H1 (cell line): ENCODE measurements at regions of chr7 and their contacts with region 1.

Region 1: DNA sequence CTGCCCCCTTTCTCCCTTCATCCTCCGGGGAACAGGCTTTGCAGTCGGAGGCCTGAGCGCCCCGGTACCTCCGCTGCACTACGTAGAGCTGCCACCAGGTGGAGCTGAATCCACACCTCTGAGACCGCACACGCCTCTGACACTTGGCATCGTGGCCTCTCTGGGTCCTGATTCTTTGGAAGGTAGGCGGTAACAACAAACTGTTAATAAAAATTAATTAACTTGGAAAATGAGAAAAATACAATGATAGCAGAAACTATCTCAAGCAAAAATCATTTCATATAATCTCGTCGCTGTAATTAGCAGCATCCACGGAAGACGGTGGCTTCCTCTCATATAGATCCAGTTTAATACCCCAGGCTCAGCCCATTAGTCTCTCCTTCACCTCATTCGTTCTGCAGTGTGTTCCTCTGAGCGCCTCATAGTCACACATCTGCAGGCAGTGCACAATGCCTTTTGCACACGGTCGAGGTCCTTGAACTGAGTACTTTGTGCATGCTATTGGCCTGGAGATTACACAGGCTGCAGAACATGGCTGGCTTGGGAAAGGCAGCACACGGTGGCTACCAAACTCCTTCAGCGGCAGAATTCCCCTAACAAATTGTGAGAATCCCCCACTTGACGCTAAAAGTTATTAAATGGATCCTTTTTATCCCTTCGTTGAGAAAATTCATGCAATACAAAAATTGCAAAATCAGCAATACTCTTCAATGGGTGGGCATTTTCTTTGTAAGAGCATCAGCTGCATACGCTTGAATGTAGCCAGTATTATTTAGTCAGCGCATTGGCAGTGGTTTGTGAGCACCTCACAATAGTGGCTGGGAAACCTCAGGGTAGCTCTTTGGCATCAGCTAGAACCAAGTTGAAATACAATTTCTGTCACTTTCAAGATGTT is 18.7 kb downstream of the OR9A2 start:
- DNase-seq: peak; percentile 61 to 96
- H3K4me3 ChIP-seq: no peak overlapping the region
- H3K27ac ChIP-seq: no peak overlapping the region
- H3K4me1 ChIP-seq: no peaks in the 10 kb centered on the region
- H3K27me3 ChIP-seq: no peaks in the 10 kb centered on the region
- CTCF ChIP-seq: peak; percentile 89 to 98 (median 95)
- EP300 ChIP-seq: no peak
- POLR2A ChIP-seq: no peak
- RAD21 ChIP-seq: peak; percentile 98 to 99

Region 2: GRCh38 chr7:142632291-142633134 is 375.7 kb before region 1 on chr7:
- CTCF ChIA-PET with region 1: interaction called, 15 read pairs
- POLR2A ChIA-PET with region 1: no interaction called
- DNase-seq: peak; percentile 43 to 81
- H3K4me3 ChIP-seq: no peak overlapping the region
- H3K27ac ChIP-seq: no peak overlapping the region
- H3K4me1 ChIP-seq: no peaks in the 10 kb centered on the region
- H3K27me3 ChIP-seq: no peaks in the 10 kb centered on the region
- CTCF ChIP-seq: peak; percentile 59 to 90 (median 72)
- EP300 ChIP-seq: no peak
- POLR2A ChIP-seq: no peak
- RAD21 ChIP-seq: peak; percentile 87 to 92

Region 3: DNA sequence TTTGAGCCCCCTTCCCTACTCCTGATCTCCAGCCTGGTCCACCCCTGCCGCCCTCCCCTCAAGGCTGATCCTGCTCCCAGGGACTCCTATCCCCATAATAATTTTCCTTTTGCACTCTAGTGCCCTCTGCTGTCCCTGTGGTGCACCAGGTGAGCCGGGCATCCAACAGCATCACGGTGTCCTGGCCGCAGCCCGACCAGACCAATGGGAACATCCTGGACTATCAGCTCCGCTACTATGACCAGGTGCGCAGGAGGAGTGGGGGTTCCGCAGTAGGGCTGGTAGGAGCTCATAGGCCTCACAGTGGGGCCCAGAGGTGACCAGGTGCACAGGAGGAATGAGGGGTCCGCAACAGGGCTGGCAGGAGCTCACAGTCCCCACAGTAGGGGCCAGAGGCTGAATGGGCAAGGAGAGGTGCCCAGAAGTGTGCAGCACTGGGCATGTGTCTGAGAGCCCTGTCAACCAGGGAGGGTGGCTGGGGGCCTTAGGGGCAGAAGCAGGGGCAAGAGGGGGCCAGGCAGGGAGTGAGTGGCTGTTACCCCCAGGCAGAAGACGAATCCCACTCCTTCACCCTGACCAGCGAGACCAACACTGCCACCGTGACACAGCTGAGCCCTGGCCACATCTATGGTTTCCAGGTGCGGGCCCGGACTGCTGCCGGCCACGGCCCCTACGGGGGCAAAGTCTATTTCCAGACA is 141.7 kb before region 1 on chr7:
- CTCF ChIA-PET with region 1: interaction called, 332 read pairs
- POLR2A ChIA-PET with region 1: no interaction called
- DNase-seq: peak in 1 of 2 experiments; percentile 82
- H3K4me3 ChIP-seq: no peak overlapping the region
- H3K27ac ChIP-seq: no peak overlapping the region
- H3K4me1 ChIP-seq: peaks cover 3 to 10% (median 9%) of the 10 kb centered on the region in 4 experiments; a peak in 6 of 7 replicates
- H3K27me3 ChIP-seq: no peaks in the 10 kb centered on the region
- CTCF ChIP-seq: peak; percentile 79 to 84 (median 83)
- EP300 ChIP-seq: no peak
- POLR2A ChIP-seq: no peak
- RAD21 ChIP-seq: peak; percentile 67 to 77

Region 4: GRCh38 chr7:142898377-142899170 is 109.7 kb before region 1 on chr7:
- CTCF ChIA-PET with region 1: interaction called, 22 read pairs
- POLR2A ChIA-PET with region 1: no interaction called
- DNase-seq: peak in 1 of 2 experiments; percentile 17
- H3K4me3 ChIP-seq: no peak overlapping the region
- H3K27ac ChIP-seq: no peak overlapping the region
- H3K4me1 ChIP-seq: peaks cover 0 to 3% (median 0%) of the 10 kb centered on the region in 4 experiments; a peak in 1 of 7 replicates
- H3K27me3 ChIP-seq: no peaks in the 10 kb centered on the region; a peak in 1 of 7 replicates
- CTCF ChIP-seq: no peak
- EP300 ChIP-seq: no peak
- POLR2A ChIP-seq: no peak
- RAD21 ChIP-seq: no peak

Region 5: GRCh38 chr7:142927085-142927745 is 81.0 kb before region 1 on chr7:
- CTCF ChIA-PET with region 1: interaction called, 24 read pairs
- POLR2A ChIA-PET with region 1: no interaction called
- DNase-seq: no peak
- H3K4me3 ChIP-seq: no peak overlapping the region
- H3K27ac ChIP-seq: no peak overlapping the region
- H3K4me1 ChIP-seq: no peaks in the 10 kb centered on the region; a peak in 1 of 7 replicates
- H3K27me3 ChIP-seq: peaks cover 0 to 8% (median 0%) of the 10 kb centered on the region in 4 experiments; a peak in 4 of 7 replicates
- CTCF ChIP-seq: no peak
- EP300 ChIP-seq: no peak
- POLR2A ChIP-seq: no peak
- RAD21 ChIP-seq: no peak

Region 6: DNA sequence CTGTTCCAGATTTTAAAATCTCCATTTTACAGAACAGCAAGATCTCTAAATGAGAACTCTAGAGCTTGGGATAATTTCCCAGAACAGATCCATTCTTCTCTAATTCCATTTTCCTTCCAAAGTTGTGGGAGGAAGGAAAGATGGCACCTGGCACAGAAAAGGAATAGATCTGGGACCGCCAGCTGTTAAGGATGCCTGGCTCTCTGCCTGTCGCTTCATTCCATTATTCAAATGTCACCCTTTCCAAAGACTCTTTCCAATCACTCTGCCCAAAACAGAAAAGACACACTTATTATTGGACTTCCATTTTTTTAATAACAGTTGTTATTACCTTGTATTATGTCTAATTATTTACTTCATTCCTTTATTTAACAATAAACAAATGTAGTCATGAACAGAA is 19.4 kb after region 1 on chr7:
- CTCF ChIA-PET with region 1: interaction called, 13 read pairs
- POLR2A ChIA-PET with region 1: no interaction called
- DNase-seq: no peak
- H3K4me3 ChIP-seq: no peak overlapping the region
- H3K27ac ChIP-seq: no peak overlapping the region
- H3K4me1 ChIP-seq: no peaks in the 10 kb centered on the region
- H3K27me3 ChIP-seq: no peaks in the 10 kb centered on the region
- CTCF ChIP-seq: no peak
- EP300 ChIP-seq: no peak
- POLR2A ChIP-seq: no peak
- RAD21 ChIP-seq: no peak